AG04449 (cell line): ENCODE measurements at regions of chr10 and their contacts with region 1.

Region 1: DNA sequence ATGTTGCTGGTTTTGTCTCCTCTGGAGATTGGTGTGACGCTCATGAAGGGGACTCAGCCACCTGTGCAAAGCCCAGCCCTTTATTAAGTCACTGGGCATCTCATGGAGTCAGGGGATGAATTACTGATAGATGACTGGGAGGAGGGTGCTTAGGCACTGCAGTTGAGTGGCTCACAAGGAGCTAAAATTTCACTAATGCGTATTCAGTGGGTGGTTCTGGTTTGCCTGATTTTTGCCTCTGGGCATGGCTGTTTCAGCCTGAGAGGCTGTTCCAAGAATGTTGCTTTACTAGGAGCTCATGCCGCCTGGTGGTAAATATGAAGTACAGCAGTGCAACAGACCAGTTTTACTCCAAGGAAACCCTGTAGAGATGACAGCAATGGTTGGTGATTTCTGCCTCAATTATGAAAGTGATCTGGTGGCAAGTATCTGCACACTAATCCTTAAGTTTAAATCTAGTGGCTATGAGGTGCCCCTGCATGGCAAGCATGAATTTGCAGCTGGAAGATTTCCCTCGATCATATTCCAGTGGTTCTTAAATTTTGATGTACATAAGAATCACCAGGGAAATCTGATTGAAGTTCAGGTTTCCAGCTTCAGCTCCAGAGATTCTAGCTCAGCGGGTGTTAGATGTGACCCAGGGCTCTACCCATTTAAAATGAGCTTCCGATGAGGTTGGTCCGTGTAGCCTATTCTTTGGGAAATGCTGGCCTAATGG is 19.9 kb downstream of the ACTA2 start:
- DNase-seq: peak; percentile 67
- H3K4me3 ChIP-seq: no peak overlapping the region
- CTCF ChIP-seq: peak; percentile 74

Region 2: GRCh38 chr10:88810196-88810961 is 122.3 kb before region 1 on chr10:
- CTCF ChIA-PET with region 1: interaction called, 11 read pairs
- POLR2A ChIA-PET with region 1: no interaction called
- DNase-seq: no peak
- H3K4me3 ChIP-seq: no peak overlapping the region
- CTCF ChIP-seq: peak; percentile 61

Region 3: DNA sequence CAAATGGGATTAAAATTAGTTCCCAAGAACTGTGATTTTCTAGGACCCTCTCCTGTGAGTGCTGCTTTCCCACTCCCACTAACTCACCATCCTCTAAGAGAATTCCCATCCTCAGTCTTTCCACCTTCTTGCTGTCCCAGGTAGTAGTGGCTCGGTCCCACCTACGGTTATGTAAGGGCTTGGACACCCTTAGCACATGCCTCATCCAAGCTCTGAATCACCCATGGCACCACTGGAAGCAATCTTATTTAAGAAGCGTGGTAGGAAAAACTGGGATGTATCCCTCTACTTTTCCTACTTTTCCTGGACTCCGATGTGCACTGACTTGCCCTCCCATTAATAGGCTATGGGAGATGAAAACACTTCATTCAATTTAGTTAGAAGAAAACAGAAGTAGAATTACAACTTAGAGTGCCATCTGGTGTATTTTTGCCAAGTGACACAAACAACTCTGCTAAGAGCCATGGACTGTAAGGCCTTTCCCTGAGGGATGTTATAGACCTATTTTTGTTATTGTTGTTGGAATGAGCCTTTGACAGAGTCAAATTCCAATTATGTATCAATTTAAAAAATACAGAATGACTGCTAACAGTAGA is 67.3 kb before region 1 on chr10:
- CTCF ChIA-PET with region 1: interaction called, 12 read pairs
- POLR2A ChIA-PET with region 1: no interaction called
- DNase-seq: no peak
- H3K4me3 ChIP-seq: no peak overlapping the region
- CTCF ChIP-seq: no peak

Region 4: DNA sequence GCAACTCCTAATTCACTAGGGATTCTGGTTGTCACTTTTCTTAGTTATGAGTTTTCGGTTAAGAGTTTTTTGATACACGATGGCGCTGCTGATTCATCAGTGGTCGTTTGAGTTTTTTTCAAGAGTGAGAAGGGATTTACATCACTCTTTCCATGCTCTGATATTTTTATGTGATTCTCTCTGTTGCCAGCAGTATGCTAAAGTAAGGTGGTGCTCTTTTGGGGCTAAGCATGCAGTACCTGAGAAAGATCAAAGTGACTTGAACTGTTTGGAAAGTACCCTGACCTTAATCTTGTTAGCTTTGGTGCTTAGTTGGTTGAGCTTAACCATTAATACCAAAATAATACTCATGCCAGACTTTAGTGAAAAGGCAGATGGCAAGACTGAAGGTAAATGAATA is 24.5 kb before region 1 on chr10:
- CTCF ChIA-PET with region 1: interaction called, 41 read pairs
- POLR2A ChIA-PET with region 1: no interaction called
- DNase-seq: no peak
- H3K4me3 ChIP-seq: no peak overlapping the region
- CTCF ChIP-seq: no peak

Region 5: GRCh38 chr10:88990384-88991160 is 57.9 kb after region 1 on chr10 and contains the start of gene FAS:
- CTCF ChIA-PET with region 1: interaction called, 277 read pairs
- POLR2A ChIA-PET with region 1: interaction called, 8 read pairs
- DNase-seq: no peak
- H3K4me3 ChIP-seq: peak within 1 kb of the TSS; percentile 77
- CTCF ChIP-seq: no peak

Region 6: GRCh38 chr10:89100680-89101079 is 168.0 kb after region 1 on chr10:
- CTCF ChIA-PET with region 1: no interaction called
- POLR2A ChIA-PET with region 1: no interaction called
- DNase-seq: no peak
- H3K4me3 ChIP-seq: no peak overlapping the region
- CTCF ChIP-seq: no peak

Region 7: DNA sequence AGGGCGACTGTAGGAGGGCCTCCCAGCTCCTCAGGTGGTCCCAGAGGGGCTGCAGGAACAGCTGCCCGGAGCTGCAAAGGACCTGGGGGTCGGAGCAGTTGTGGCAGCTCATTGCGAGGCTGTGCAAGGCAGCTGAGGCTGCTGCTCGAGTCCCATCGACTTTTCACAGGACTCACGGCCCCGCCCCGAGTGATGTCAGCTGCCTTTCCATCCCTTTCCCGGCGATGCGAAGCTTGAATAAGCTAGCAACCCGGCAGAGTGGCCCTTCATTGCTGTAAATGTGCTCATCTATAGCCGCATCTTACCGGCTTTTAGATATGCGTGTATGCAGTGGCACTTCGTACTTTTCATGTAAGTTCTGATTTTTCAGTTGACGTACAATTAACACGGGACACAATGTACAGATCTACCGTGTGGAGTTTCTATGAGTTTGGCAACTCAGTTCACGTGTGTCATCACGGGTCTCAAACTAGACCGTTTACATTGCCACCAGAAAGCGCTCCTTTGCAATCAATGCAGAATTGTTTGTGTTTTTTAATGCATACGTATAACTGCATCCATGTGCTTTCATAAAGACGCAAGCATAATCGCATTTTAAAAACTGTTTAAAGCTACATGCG is 274.6 kb after region 1 on chr10 and contains the start of gene CH25H:
- CTCF ChIA-PET with region 1: interaction called, 29 read pairs
- POLR2A ChIA-PET with region 1: no interaction called
- DNase-seq: no peak
- H3K4me3 ChIP-seq: peak within 1 kb of the TSS; percentile 66
- CTCF ChIP-seq: no peak

Region 8: GRCh38 chr10:89283936-89284475 is 351.3 kb after region 1 on chr10:
- CTCF ChIA-PET with region 1: no interaction called
- POLR2A ChIA-PET with region 1: no interaction called
- DNase-seq: no peak
- H3K4me3 ChIP-seq: no peak overlapping the region
- CTCF ChIP-seq: no peak